AG04449 (cell line): ENCODE measurements at regions of chr9 and their contacts with region 1.

Region 1: DNA sequence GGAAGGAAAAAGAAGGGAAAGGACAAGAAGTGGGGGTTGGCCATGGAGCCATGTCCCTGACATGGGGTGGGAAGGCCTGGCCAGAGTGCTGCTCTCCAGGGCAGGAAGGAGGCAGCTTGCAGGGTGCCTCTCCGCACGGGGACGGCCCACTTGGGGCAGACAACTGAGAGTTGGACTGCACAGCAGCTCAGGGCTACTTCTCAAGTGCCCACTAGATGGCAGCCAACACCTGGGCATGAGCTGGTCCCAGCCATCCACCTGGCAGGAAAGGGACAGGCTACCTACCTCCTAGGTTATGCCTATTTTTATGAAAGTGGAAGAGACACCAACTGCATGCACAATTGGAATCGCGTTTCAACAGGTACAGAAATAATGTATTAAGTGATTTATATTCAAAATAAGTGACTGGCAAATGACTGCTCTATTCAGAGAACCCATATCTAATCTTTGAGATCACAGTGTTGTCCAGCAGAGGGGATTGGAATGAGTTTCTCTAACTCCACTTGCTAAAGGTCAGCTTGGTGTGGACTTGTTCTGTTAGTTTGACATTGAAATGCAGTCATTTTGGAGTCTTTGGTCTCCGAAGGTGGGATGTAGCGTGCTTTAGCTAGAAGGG is 113.4 kb downstream of the SYK start:
- DNase-seq: no peak
- H3K4me3 ChIP-seq: no peak overlapping the region
- CTCF ChIP-seq: peak; percentile 83

Region 2: DNA sequence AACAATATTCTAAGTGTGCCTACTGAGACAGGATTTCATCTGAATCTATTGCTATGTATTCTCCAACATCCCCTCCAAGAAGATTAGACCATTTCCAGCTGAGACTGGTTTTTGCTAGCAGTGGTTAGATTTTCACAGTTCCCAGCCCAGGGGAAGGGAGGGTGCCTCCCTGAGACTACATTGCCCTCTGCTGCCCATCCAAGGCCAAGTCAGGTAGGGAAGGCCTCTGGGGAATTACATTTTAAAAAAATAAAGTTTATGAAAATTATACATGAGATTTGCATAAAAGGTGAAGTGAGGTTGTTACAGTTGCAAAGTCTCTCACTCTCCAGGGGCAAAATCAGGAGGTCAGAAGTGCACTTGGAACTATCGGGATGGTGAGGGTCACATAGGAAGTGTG is 141.4 kb before region 1 on chr9:
- CTCF ChIA-PET with region 1: no interaction called
- POLR2A ChIA-PET with region 1: no interaction called
- DNase-seq: no peak
- H3K4me3 ChIP-seq: no peak overlapping the region
- CTCF ChIP-seq: no peak

Region 3: DNA sequence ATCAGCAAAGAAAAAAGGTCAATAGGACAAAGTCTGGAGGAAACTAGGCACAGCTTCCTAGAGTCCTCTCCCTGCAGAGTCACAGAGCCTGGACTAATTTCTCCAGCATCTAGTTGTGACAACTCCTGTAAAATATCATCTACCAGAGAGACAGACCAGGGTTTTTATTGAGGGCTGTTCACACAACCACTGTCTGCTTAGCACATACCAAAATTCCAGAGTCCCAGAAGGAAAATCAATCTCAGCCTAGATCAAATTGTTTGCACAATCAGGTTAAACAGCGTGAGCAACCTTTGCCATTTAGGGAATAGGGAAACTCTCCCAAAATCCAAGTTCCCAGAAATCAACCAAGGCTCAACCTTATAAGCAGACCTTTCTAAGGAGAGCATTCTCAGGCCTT is 77.0 kb after region 1 on chr9:
- CTCF ChIA-PET with region 1: interaction called, 10 read pairs
- POLR2A ChIA-PET with region 1: no interaction called
- DNase-seq: no peak
- H3K4me3 ChIP-seq: no peak overlapping the region
- CTCF ChIP-seq: no peak

Region 4: GRCh38 chr9:91100878-91101450 is 186.0 kb after region 1 on chr9:
- CTCF ChIA-PET with region 1: interaction called, 19 read pairs
- POLR2A ChIA-PET with region 1: no interaction called
- DNase-seq: no peak
- H3K4me3 ChIP-seq: no peak overlapping the region
- CTCF ChIP-seq: no peak

Region 5: GRCh38 chr9:91681461-91682305 is 766.7 kb after region 1 on chr9:
- CTCF ChIA-PET with region 1: interaction called, 19 read pairs
- POLR2A ChIA-PET with region 1: no interaction called
- DNase-seq: no peak
- H3K4me3 ChIP-seq: no peak overlapping the region
- CTCF ChIP-seq: peak; percentile 96

Region 6: DNA sequence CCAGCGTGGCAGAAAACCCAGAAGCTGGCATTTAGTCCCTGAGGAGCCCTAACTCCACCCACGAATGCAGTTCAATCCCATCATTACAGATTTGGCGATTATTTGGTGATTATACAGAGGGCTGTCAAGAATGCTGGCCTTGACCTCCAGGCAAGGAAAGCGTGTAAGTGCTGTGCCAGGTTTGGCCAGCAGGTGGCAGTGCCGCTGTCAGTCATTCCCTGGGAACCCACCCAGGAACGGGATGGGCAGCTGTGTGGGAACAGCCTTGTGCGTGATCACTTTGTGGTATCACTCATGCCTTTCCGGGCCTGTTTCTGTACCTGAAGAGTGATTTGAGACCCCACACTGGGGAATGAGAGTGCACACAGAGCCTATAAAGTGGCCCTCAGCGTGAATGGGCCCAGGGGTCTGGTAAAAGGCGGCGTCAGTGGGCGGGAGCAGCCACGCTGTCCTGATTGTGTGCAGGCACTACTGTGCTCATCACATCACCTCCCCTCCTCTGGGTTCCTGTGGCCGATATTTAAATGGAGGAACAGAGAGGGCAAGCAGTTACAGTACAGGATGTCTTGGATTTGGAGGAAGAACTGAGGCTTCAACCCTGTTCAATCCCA is 819.5 kb after region 1 on chr9:
- CTCF ChIA-PET with region 1: interaction called, 71 read pairs
- POLR2A ChIA-PET with region 1: no interaction called
- DNase-seq: no peak
- H3K4me3 ChIP-seq: no peak overlapping the region
- CTCF ChIP-seq: peak; percentile 96